HepG2 (cell line): ENCODE measurements at regions of chr4 and their contacts with region 1.

Region 1: GRCh38 chr4:172042714-172043114 is 229.5 kb downstream of the GALNTL6 start:
- DNase-seq: peak; percentile 7
- ATAC-seq: no peak
- H3K4me3 ChIP-seq: no peak overlapping the region
- H3K27ac ChIP-seq: no peak overlapping the region
- H3K4me1 ChIP-seq: no peaks in the 10 kb centered on the region
- H3K27me3 ChIP-seq: no peaks in the 10 kb centered on the region
- CTCF ChIP-seq: no peak
- EP300 ChIP-seq: no peak
- POLR2A ChIP-seq: no peak
- RAD21 ChIP-seq: no peak

Region 2: GRCh38 chr4:171573181-171573580 is 469.5 kb before region 1 on chr4:
- CTCF ChIA-PET with region 1: no interaction called
- POLR2A ChIA-PET with region 1: no interaction called
- in situ Hi-C with region 1: no loop called
- intact Hi-C with region 1: no loop called
- DNase-seq: no peak
- ATAC-seq: no peak
- H3K4me3 ChIP-seq: no peak overlapping the region
- H3K27ac ChIP-seq: no peak overlapping the region
- H3K4me1 ChIP-seq: no peaks in the 10 kb centered on the region
- H3K27me3 ChIP-seq: no peaks in the 10 kb centered on the region
- CTCF ChIP-seq: no peak
- EP300 ChIP-seq: no peak
- POLR2A ChIP-seq: no peak
- RAD21 ChIP-seq: no peak

Region 3: DNA sequence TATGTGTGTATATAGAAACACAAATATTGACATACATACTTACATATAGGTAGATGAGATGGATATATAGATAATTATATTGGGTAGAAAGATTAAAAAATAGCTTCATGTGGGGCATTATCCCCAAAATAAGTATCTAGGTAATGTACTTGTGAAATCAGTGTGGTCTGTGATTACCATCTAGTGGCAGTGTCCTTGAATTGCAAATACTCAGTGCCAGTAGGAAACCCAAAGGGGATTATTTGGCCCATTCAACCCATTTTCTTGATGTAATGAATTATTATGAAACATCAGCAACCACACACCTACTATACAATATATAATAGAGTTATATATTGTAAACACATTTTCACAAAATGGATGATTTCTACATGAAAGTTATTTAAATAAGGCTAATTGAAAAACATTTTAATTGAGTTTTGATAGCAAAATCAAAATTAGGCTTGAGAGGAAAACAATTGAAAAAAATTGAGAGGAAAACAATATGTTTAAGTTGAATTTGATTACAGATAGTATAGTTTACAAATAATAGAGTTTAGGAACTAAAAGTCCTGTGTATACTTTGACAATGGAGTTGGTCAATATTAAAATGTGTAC is 159.9 kb after region 1 on chr4:
- CTCF ChIA-PET with region 1: no interaction called
- POLR2A ChIA-PET with region 1: no interaction called
- in situ Hi-C with region 1: no loop called
- intact Hi-C with region 1: loop called (anchors 10 kb)
- DNase-seq: peak; percentile 10
- ATAC-seq: peak; percentile 32; the same call in 1 of the 3 replicates
- H3K4me3 ChIP-seq: no peak overlapping the region
- H3K27ac ChIP-seq: no peak overlapping the region
- H3K4me1 ChIP-seq: no peaks in the 10 kb centered on the region
- H3K27me3 ChIP-seq: no peaks in the 10 kb centered on the region
- CTCF ChIP-seq: peak; percentile 64
- EP300 ChIP-seq: no peak
- POLR2A ChIP-seq: no peak
- RAD21 ChIP-seq: no peak